Gastrocnemius medialis (tissue), 4 donors: ENCODE measurements at regions of chr20 and their contacts with region 1.

Region 1: GRCh38 chr20:2713285-2713684 is 20.7 kb downstream of the EBF4 start:
- DNase-seq: no peak
- ATAC-seq: no peak
- H3K4me3 ChIP-seq: no peak overlapping the region
- H3K27ac ChIP-seq: no peak overlapping the region
- H3K4me1 ChIP-seq: no peaks in the 10 kb centered on the region
- H3K27me3 ChIP-seq: peaks cover 0 to 3% (median 0%) of the 10 kb centered on the region in 3 donors
- CTCF ChIP-seq: no peak
- POLR2A ChIP-seq: no peak

Region 2: GRCh38 chr20:2619961-2620595 is 93.2 kb before region 1 on chr20:
- in situ Hi-C with region 1: no loop called
- intact Hi-C with region 1: no loop called
- DNase-seq: no peak
- ATAC-seq: no peak
- H3K4me3 ChIP-seq: no peak overlapping the region
- H3K27ac ChIP-seq: no peak overlapping the region
- H3K4me1 ChIP-seq: no peaks in the 10 kb centered on the region
- H3K27me3 ChIP-seq: no peaks in the 10 kb centered on the region
- CTCF ChIP-seq: no peak
- POLR2A ChIP-seq: no peak

Region 3: DNA sequence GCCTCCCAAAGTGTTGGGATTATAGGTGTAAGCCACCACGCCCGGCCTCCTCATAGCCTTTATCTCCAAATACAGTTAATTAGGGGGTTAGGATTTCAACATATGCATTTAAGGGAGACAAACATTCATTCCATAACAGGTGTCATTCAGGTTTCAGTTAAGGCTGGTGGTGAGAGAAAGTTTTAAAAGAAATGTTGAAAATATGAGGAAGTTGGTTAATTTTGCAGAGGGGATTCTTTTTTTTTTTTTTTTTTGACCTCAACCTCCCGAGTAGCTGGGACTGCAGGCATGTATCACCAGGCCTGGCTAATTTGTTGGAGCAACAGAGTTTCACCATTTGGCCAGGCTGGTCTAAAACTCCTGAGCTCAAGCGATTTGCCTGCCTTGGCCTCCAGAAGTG is 33.2 kb before region 1 on chr20:
- in situ Hi-C with region 1: no loop called
- intact Hi-C with region 1: no loop called
- DNase-seq: no peak
- ATAC-seq: no peak
- H3K4me3 ChIP-seq: no peak overlapping the region
- H3K27ac ChIP-seq: no peak overlapping the region
- H3K4me1 ChIP-seq: no peaks in the 10 kb centered on the region
- H3K27me3 ChIP-seq: peaks cover 0 to 7% (median 2%) of the 10 kb centered on the region in 3 donors
- CTCF ChIP-seq: no peak
- POLR2A ChIP-seq: no peak

Region 4: GRCh38 chr20:2771631-2772080 is 58.4 kb after region 1 on chr20:
- in situ Hi-C with region 1: no loop called
- intact Hi-C with region 1: loop called (anchors 2 kb)
- DNase-seq: no peak
- ATAC-seq: no peak
- H3K4me3 ChIP-seq: no peak overlapping the region
- H3K27ac ChIP-seq: no peak overlapping the region
- H3K4me1 ChIP-seq: no peaks in the 10 kb centered on the region
- H3K27me3 ChIP-seq: peaks cover 0 to 10% (median 8%) of the 10 kb centered on the region in 3 donors
- CTCF ChIP-seq: no peak
- POLR2A ChIP-seq: no peak

Region 5: DNA sequence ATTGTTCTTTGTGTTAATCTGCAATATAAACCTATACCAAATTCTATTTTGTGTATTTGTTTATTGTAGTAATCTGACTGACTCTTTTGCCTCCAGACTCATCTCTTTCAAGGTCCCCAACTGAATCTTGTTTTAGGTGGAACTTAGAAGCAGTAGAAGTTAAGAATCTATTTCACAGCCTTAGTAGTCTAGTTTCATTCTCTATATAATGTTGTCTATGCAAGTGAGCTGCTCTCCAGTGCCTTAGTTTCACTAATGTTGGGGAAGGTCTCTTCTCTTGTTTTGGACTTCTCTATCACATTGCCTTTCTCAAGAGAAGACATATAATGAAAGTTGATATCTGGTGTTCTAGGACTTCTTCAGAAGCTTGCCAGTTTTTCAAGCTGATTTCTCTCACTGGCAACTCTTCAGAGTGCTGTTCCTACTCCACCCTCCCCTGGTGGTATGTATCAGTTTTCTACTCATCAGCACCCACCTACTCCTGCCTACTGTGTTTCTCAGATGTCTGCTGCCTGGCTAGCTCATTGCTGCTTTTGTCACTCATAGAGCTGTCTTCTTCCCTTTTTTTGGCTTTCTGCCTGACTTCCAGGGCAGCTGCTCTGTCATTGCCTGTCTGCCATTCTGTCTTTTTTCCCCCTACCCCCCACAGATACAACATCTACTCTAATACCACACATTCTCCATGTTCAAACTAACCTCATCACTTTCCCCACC is 242.1 kb after region 1 on chr20:
- in situ Hi-C with region 1: no loop called
- intact Hi-C with region 1: no loop called
- DNase-seq: peak in 1 of 2 donors; percentile 23
- ATAC-seq: peak; percentile 75 to 80
- H3K4me3 ChIP-seq: no peak overlapping the region
- H3K27ac ChIP-seq: peak overlapping the region in 2 of 4 donors; percentile 2 to 60
- H3K4me1 ChIP-seq: peaks cover 9 to 12% of the 10 kb centered on the region in 2 donors
- H3K27me3 ChIP-seq: no peaks in the 10 kb centered on the region
- CTCF ChIP-seq: no peak
- POLR2A ChIP-seq: no peak